ENCODE measurements at regions of chr11 and their contacts with region 1.

Region 1: GRCh38 chr11:118145285-118146227 is 7.1 kb downstream of the SCN4B start:
- DNase-seq: peak; percentile 76 to 95 (median 82)
- ATAC-seq: peak; percentile 93
- H3K4me3 ChIP-seq: peak overlapping the region; percentile 80
- H3K4me3 Mint-ChIP-seq: peak overlapping the region; percentile 84
- H3K27ac ChIP-seq: no peak overlapping the region
- H3K27ac Mint-ChIP-seq: no peak overlapping the region
- H3K4me1 ChIP-seq: peaks cover 16% of the 10 kb centered on the region
- H3K4me1 Mint-ChIP-seq: peaks cover 5% of the 10 kb centered on the region
- H3K27me3 ChIP-seq: peaks cover 18 to 60% of the 10 kb centered on the region in 2 experiments
- H3K27me3 Mint-ChIP-seq: peaks cover 81% of the 10 kb centered on the region
- CTCF ChIP-seq: peak; percentile 79

Region 2: GRCh38 chr11:116821050-116821918 is 1324.3 kb before region 1 on chr11:
- CTCF ChIA-PET with region 1: no interaction called
- POLR2A ChIA-PET with region 1: no interaction called
- intact Hi-C with region 1: no loop called
- DNase-seq: no peak
- ATAC-seq: no peak
- H3K4me3 ChIP-seq: no peak overlapping the region
- H3K4me3 Mint-ChIP-seq: no peak overlapping the region
- H3K27ac ChIP-seq: no peak overlapping the region
- H3K27ac Mint-ChIP-seq: no peak overlapping the region
- H3K4me1 ChIP-seq: no peaks in the 10 kb centered on the region
- H3K4me1 Mint-ChIP-seq: no peaks in the 10 kb centered on the region
- H3K27me3 ChIP-seq: no peaks in the 10 kb centered on the region
- H3K27me3 Mint-ChIP-seq: no peaks in the 10 kb centered on the region
- CTCF ChIP-seq: no peak

Region 3: GRCh38 chr11:118290923-118291322 is 145.4 kb after region 1 on chr11:
- CTCF ChIA-PET with region 1: no interaction called
- POLR2A ChIA-PET with region 1: no interaction called
- intact Hi-C with region 1: loop called in 1 of 2 experiments (anchors 1 kb)
- DNase-seq: peak in 12 of 14 experiments; percentile 11 to 78 (median 28)
- ATAC-seq: peak; percentile 70
- H3K4me3 ChIP-seq: no peak overlapping the region
- H3K4me3 Mint-ChIP-seq: no peak overlapping the region
- H3K27ac ChIP-seq: no peak overlapping the region
- H3K27ac Mint-ChIP-seq: no peak overlapping the region
- H3K4me1 ChIP-seq: peaks cover 9% of the 10 kb centered on the region
- H3K4me1 Mint-ChIP-seq: peaks cover 11% of the 10 kb centered on the region
- H3K27me3 ChIP-seq: no peaks in the 10 kb centered on the region
- H3K27me3 Mint-ChIP-seq: no peaks in the 10 kb centered on the region
- CTCF ChIP-seq: peak; percentile 68

Region 4: GRCh38 chr11:118488480-118489109 is 343.0 kb after region 1 on chr11:
- CTCF ChIA-PET with region 1: no interaction called
- POLR2A ChIA-PET with region 1: no interaction called
- intact Hi-C with region 1: loop called (anchors 1 to 2 kb)
- DNase-seq: peak; percentile 67 to 91 (median 76)
- ATAC-seq: peak; percentile 88
- H3K4me3 ChIP-seq: no peak overlapping the region
- H3K4me3 Mint-ChIP-seq: no peak overlapping the region
- H3K27ac ChIP-seq: peak overlapping the region in 1 of 2 donors; percentile 37
- H3K27ac Mint-ChIP-seq: peak overlapping the region; percentile 4
- H3K4me1 ChIP-seq: peaks cover 2% of the 10 kb centered on the region
- H3K4me1 Mint-ChIP-seq: peaks cover 5% of the 10 kb centered on the region
- H3K27me3 ChIP-seq: no peaks in the 10 kb centered on the region
- H3K27me3 Mint-ChIP-seq: no peaks in the 10 kb centered on the region
- CTCF ChIP-seq: peak; percentile 89

Region 5: DNA sequence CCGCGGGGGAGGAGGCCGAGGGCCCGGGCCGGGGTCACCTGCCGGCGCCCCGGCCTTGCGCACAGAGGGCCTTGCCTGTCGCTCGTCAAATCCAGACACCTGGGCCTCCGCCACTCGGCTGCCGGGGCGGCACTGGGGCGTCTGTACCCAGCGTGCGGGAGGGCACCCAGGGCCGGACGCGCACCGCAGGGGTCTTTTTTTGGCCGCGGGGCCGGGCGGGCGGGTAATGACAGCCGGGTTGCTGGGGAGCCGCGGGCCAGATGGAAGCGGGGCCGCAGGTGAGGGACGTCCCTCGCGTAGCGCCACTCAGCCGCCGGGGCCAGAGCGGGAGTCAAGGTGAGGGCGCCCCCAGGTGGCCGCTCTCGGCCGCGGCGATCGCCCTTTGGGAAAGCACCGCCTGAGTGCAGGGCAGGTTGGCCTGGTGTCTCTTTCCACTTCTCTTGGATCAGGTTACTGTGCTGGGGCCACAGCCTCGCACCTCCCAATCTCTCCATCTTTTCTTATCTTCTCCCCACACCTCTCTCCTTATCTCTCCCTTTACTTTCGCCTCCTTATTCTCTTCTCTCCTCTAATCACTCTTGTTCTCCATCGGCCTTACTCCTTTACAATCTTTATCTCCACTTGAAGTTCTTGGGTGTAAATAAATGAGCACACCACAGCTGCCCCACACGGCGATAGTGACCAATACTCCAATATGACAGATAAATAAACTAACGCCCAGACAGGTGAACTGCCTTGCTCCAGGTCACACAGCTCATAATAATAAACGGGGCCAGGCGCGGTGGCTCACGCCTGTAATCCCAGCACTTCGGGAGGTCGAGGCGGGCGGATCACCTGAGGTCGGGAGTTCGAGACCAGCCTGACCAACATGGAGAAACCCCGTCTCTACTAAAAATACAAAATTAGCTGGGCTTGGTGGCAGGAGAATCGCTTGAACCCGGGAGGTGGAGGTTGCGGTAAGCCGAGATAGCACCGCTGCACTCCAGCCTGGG is 465.5 kb after region 1 on chr11:
- CTCF ChIA-PET with region 1: no interaction called
- POLR2A ChIA-PET with region 1: no interaction called
- intact Hi-C with region 1: loop called in 1 of 2 experiments (anchors 2 kb)
- DNase-seq: peak; percentile 74 to 93 (median 82)
- ATAC-seq: peak; percentile 35
- H3K4me3 ChIP-seq: peak overlapping the region; percentile 47
- H3K4me3 Mint-ChIP-seq: peak overlapping the region; percentile 85
- H3K27ac ChIP-seq: no peak overlapping the region
- H3K27ac Mint-ChIP-seq: peak overlapping the region; percentile 43
- H3K4me1 ChIP-seq: peaks cover 44% of the 10 kb centered on the region
- H3K4me1 Mint-ChIP-seq: peaks cover 24% of the 10 kb centered on the region
- H3K27me3 ChIP-seq: peaks cover 0 to 9% of the 10 kb centered on the region in 2 experiments
- H3K27me3 Mint-ChIP-seq: peaks cover 25% of the 10 kb centered on the region
- CTCF ChIP-seq: peak; percentile 96

Region 6: DNA sequence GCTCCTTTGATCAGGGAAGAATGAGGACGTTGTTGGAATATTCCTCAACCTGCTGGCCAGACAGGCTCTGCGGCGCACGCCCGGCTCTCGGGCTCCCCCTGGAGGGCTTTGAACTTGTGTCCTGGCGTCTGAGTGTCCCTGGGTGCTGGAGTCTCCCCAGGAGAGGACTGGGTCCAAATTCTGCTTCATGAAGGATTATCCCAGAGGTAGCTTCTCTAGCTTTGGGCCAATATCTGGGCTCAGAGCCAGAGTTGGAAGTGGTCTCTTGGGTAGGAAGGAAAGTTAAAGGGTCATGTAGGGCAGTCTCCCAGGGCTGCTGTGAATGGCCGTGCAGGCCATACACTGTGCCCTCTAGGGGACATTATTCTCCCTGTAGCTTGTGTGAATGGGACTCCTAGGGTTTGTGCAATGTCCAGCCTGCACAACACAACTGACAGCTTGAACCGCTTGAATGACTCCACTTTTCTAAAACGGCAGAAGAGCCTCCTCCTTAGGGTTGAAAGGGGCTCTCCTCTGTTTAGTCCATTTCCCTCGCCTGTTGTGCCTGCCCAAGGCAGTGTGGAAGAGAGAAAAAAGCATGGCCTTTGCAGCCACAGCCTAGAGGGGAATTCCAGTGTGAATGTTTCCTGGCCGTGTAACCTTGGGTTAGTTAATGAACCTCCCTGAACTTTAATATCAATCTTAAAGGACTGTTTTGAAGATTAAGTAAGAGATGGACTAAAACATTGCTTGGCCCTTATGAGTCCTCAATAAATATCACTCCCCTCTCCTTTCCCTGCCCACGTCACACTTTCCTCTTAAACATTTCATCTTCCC is 1388.6 kb after region 1 on chr11:
- CTCF ChIA-PET with region 1: no interaction called
- POLR2A ChIA-PET with region 1: no interaction called
- intact Hi-C with region 1: no loop called
- DNase-seq: peak; percentile 8 to 62 (median 34)
- ATAC-seq: no peak
- H3K4me3 ChIP-seq: no peak overlapping the region
- H3K4me3 Mint-ChIP-seq: no peak overlapping the region
- H3K27ac ChIP-seq: no peak overlapping the region
- H3K27ac Mint-ChIP-seq: no peak overlapping the region
- H3K4me1 ChIP-seq: no peaks in the 10 kb centered on the region
- H3K4me1 Mint-ChIP-seq: no peaks in the 10 kb centered on the region
- H3K27me3 ChIP-seq: peaks cover 2 to 5% of the 10 kb centered on the region in 2 experiments
- H3K27me3 Mint-ChIP-seq: peaks cover 39% of the 10 kb centered on the region
- CTCF ChIP-seq: peak; percentile 78